ENCODE measurements at regions of chr3 and their contacts with region 1.

Region 1: GRCh38 chr3:30611613-30612436 is 5.4 kb downstream of the TGFBR2 start:
- DNase-seq: no peak
- ATAC-seq: peak; percentile 49
- H3K4me3 ChIP-seq: peak overlapping the region; percentile 92
- H3K4me3 Mint-ChIP-seq: peak overlapping the region; percentile 88 to 100 (median 95)
- H3K27ac ChIP-seq: peak overlapping the region; percentile 79
- H3K27ac Mint-ChIP-seq: peak overlapping the region; percentile 87 to 99 (median 95)
- H3K4me1 ChIP-seq: peaks cover 30 to 65% of the 10 kb centered on the region in 2 donors
- H3K4me1 Mint-ChIP-seq: peaks cover 60 to 75% (median 63%) of the 10 kb centered on the region in 7 donors
- H3K27me3 ChIP-seq: no peaks in the 10 kb centered on the region
- H3K27me3 Mint-ChIP-seq: no peaks in the 10 kb centered on the region

Region 2: GRCh38 chr3:29128001-29128400 is 1483.8 kb before region 1 on chr3:
- CTCF ChIA-PET with region 1: no interaction called
- POLR2A ChIA-PET with region 1: no interaction called
- intact Hi-C with region 1: no loop called
- DNase-seq: no peak
- ATAC-seq: no peak
- H3K4me3 ChIP-seq: no peak overlapping the region
- H3K4me3 Mint-ChIP-seq: no peak overlapping the region
- H3K27ac ChIP-seq: no peak overlapping the region
- H3K27ac Mint-ChIP-seq: no peak overlapping the region
- H3K4me1 ChIP-seq: no peaks in the 10 kb centered on the region
- H3K4me1 Mint-ChIP-seq: peaks cover 0 to 4% (median 0%) of the 10 kb centered on the region in 7 donors
- H3K27me3 ChIP-seq: no peaks in the 10 kb centered on the region
- H3K27me3 Mint-ChIP-seq: peaks cover 0 to 1% (median 0%) of the 10 kb centered on the region in 5 donors

Region 3: DNA sequence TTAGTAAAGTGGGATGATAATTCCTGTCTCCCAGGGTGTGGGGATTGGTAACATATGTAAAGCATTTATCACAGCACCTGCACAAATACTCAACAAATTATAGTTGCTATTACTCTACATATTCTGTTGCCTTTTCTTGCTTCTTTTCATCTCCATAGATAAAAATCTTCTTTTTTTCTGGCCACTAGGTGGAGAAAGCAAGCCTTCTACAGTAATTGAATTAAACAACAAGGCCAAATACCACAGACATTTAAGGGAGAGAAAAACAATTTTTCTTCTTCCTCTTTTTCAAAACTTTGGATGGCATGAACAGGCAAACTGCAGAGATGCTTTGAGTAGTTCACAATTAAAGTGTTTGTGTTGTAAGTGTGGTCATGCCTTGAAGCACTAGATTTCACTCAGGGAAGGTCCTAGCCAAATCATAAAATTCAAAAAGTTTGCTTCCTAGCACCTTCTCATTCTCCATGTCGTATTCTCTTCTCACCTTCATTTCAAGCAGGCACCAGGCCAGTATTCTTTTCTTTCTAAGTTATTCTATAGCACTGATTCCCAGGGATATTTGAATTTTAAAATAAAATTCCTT is 498.8 kb before region 1 on chr3:
- CTCF ChIA-PET with region 1: no interaction called
- POLR2A ChIA-PET with region 1: no interaction called
- intact Hi-C with region 1: loop called in 1 of 2 experiments (anchors 5 kb)
- DNase-seq: peak in 7 of 9 donors; percentile 17 to 68 (median 55)
- ATAC-seq: peak; percentile 61
- H3K4me3 ChIP-seq: no peak overlapping the region
- H3K4me3 Mint-ChIP-seq: no peak overlapping the region
- H3K27ac ChIP-seq: no peak overlapping the region
- H3K27ac Mint-ChIP-seq: no peak overlapping the region
- H3K4me1 ChIP-seq: no peaks in the 10 kb centered on the region
- H3K4me1 Mint-ChIP-seq: peaks cover 4 to 8% (median 6%) of the 10 kb centered on the region in 7 donors
- H3K27me3 ChIP-seq: no peaks in the 10 kb centered on the region
- H3K27me3 Mint-ChIP-seq: peaks cover 0 to 16% (median 9%) of the 10 kb centered on the region in 5 donors

Region 4: GRCh38 chr3:30332196-30333021 is 279.4 kb before region 1 on chr3:
- CTCF ChIA-PET with region 1: no interaction called
- POLR2A ChIA-PET with region 1: no interaction called
- intact Hi-C with region 1: loop called in 1 of 2 experiments (anchors 5 kb)
- DNase-seq: peak in 7 of 9 donors; percentile 45 to 83 (median 76)
- ATAC-seq: peak; percentile 89
- H3K4me3 ChIP-seq: peak overlapping the region; percentile 35
- H3K4me3 Mint-ChIP-seq: peak overlapping the region; percentile 63 to 91 (median 84)
- H3K27ac ChIP-seq: peak overlapping the region; percentile 28
- H3K27ac Mint-ChIP-seq: peak overlapping the region; percentile 74 to 99 (median 96)
- H3K4me1 ChIP-seq: peaks cover 0 to 30% of the 10 kb centered on the region in 2 donors
- H3K4me1 Mint-ChIP-seq: peaks cover 4 to 58% (median 46%) of the 10 kb centered on the region in 7 donors
- H3K27me3 ChIP-seq: no peaks in the 10 kb centered on the region
- H3K27me3 Mint-ChIP-seq: no peaks in the 10 kb centered on the region

Region 5: GRCh38 chr3:30623351-30623750 is 11.5 kb after region 1 on chr3:
- CTCF ChIA-PET with region 1: interaction called, 9 read pairs
- POLR2A ChIA-PET with region 1: interaction called, 853 read pairs
- intact Hi-C with region 1: loop called (anchors 1 kb)
- DNase-seq: peak in 1 of 9 donors; percentile 7
- ATAC-seq: no peak
- H3K4me3 ChIP-seq: peak overlapping the region; percentile 14
- H3K4me3 Mint-ChIP-seq: peak overlapping the region; percentile 61 to 100 (median 78)
- H3K27ac ChIP-seq: peak overlapping the region; percentile 45
- H3K27ac Mint-ChIP-seq: peak overlapping the region; percentile 83 to 98 (median 94)
- H3K4me1 ChIP-seq: peaks cover 74 to 98% of the 10 kb centered on the region in 2 donors
- H3K4me1 Mint-ChIP-seq: peaks cover 70 to 100% (median 96%) of the 10 kb centered on the region in 7 donors
- H3K27me3 ChIP-seq: no peaks in the 10 kb centered on the region
- H3K27me3 Mint-ChIP-seq: no peaks in the 10 kb centered on the region

Region 6: GRCh38 chr3:30667280-30667651 is 55.4 kb after region 1 on chr3:
- CTCF ChIA-PET with region 1: interaction called, 3 read pairs
- POLR2A ChIA-PET with region 1: interaction called, 43 read pairs
- intact Hi-C with region 1: loop called in 1 of 2 experiments (anchors 1 kb)
- DNase-seq: peak in 6 of 9 donors; percentile 60 to 71 (median 66)
- ATAC-seq: peak; percentile 59
- H3K4me3 ChIP-seq: no peak overlapping the region
- H3K4me3 Mint-ChIP-seq: peak overlapping the region; percentile 16 to 88 (median 62)
- H3K27ac ChIP-seq: peak overlapping the region; percentile 72
- H3K27ac Mint-ChIP-seq: peak overlapping the region; percentile 82 to 99 (median 94)
- H3K4me1 ChIP-seq: peaks cover 46 to 95% of the 10 kb centered on the region in 2 donors
- H3K4me1 Mint-ChIP-seq: peaks cover 64 to 100% (median 99%) of the 10 kb centered on the region in 7 donors
- H3K27me3 ChIP-seq: no peaks in the 10 kb centered on the region
- H3K27me3 Mint-ChIP-seq: no peaks in the 10 kb centered on the region

Region 7: DNA sequence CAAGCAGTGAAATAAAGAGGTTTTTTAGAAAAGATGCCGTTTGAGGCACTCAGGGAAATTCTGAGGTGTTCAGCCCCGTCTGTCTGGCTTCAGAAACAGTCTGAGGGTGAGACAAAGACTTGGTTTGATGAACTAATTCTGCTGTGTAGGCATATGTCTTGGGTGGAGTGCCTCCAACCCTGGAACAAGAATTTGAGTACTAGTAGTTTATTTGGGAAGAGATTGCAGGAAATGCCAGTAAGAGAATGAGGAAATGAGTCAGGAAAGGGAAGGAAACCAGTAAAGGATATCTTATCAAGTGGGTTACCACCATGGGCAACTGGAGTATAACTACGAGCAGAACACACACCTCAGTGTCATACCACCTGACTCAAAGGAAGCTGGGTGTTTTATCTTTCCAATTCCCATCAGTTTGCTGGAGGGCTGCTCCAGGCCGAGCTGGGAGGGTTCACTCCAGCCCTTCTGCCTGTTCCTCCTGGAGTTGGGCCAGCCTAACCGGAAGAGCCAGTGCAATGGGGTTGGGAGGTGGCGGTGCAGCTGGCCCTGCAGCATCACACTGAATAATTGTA is 69.9 kb after region 1 on chr3:
- CTCF ChIA-PET with region 1: no interaction called
- POLR2A ChIA-PET with region 1: interaction called, 4 read pairs
- intact Hi-C with region 1: loop called in 1 of 2 experiments (anchors 2 kb)
- DNase-seq: peak in 2 of 9 donors; percentile 25 to 26
- ATAC-seq: peak; percentile 51
- H3K4me3 ChIP-seq: no peak overlapping the region
- H3K4me3 Mint-ChIP-seq: peak overlapping the region; percentile 39 to 88 (median 78)
- H3K27ac ChIP-seq: peak overlapping the region; percentile 52
- H3K27ac Mint-ChIP-seq: peak overlapping the region; percentile 62 to 98 (median 93)
- H3K4me1 ChIP-seq: peaks cover 32 to 84% of the 10 kb centered on the region in 2 donors
- H3K4me1 Mint-ChIP-seq: peaks cover 61 to 100% (median 93%) of the 10 kb centered on the region in 7 donors
- H3K27me3 ChIP-seq: no peaks in the 10 kb centered on the region
- H3K27me3 Mint-ChIP-seq: no peaks in the 10 kb centered on the region

Region 8: DNA sequence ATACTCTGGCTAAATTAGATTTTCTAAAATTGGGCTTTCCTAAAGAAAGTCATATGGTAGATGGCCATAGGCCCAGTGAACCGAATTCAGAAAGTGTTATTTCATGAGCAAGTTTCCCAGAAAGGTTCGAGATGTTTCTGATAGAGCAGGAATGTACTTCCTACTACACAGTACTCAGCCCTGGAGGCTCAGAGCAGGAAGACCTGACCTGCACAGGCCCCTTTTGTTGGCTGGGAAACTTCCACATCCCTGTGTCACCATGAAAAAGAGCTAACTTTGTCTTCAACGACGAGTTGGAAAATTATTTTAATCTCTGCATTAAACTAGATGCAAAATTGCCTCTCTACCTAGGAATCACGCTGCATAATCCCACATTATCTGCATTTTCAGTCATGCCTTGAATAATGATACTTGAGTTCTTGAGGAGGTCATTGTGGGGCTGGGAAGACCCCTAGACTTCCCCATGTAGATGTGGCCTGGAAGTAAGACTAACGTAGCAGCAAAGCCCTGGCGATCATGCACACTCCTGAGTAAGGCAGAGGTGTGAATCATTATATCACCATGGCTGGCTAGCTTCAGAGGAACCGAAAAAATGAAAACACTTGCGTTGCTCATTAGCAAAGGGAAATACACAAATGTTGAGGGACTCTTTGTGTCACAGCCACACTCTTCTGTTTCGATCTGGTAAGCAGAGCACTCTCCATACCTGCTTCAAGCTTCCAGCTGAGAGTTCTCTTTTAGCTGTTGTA is 1826.9 kb after region 1 on chr3:
- CTCF ChIA-PET with region 1: no interaction called
- POLR2A ChIA-PET with region 1: interaction called, 4 read pairs
- intact Hi-C with region 1: loop called in 1 of 2 experiments (anchors 10 kb)
- DNase-seq: peak in 1 of 9 donors; percentile 24
- ATAC-seq: peak; percentile 65
- H3K4me3 ChIP-seq: no peak overlapping the region
- H3K4me3 Mint-ChIP-seq: peak overlapping the region in 6 of 10 donors; percentile 1 to 80 (median 46)
- H3K27ac ChIP-seq: no peak overlapping the region
- H3K27ac Mint-ChIP-seq: peak overlapping the region; percentile 45 to 87 (median 80)
- H3K4me1 ChIP-seq: peaks cover 42 to 47% of the 10 kb centered on the region in 2 donors
- H3K4me1 Mint-ChIP-seq: peaks cover 29 to 88% (median 78%) of the 10 kb centered on the region in 7 donors
- H3K27me3 ChIP-seq: no peaks in the 10 kb centered on the region
- H3K27me3 Mint-ChIP-seq: no peaks in the 10 kb centered on the region